HAP-1 (cell line): ENCODE measurements at regions of chr16 and their contacts with region 1.

Region 1: DNA sequence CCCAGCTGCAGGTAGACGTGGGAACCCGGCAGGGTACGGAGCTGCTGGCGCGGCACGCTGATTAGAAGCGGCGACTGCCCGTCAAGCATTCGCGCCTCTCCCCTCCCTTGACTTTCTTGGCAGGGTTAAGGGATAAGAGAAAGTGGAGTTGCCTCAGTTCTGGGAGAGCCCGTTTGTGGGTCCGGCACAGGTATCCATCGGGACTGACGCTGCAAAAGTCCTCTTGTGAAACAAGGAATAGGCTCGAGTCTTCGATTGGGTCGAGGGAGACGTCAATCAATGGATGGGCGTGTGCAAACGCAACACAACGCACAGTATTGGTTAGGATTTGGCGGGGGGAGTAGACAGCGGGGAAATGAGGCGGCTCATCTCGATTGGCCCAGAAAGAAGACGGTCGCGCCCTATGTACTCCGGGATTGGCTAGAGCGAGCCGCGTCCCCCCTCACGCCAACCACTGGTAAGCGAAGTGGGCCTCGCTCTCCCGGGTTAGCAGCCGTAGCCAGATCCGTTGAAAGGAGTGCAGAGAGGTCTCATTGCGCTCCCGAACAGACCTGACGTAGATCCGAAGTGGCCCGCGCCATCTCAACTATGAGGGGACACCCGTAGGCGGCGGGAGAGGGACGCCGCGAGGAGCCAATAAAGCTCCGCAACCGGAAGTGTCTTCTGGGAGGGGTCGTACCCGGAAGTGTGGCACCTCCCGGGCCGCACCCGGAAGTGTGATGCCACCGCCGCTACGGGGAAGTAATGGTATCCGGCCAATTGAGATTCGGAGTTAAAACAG is at the start of gene MON1B:
- DNase-seq: peak; percentile 96
- H3K4me3 ChIP-seq: peak within 1 kb of the TSS; percentile 69
- H3K4me1 ChIP-seq: peaks cover 8% of the 10 kb centered on the region; the same call in 1 of the 2 replicates
- H3K27me3 ChIP-seq: no peaks in the 10 kb centered on the region; the same call in 1 of the 2 replicates

Region 2: GRCh38 chr16:75647492-75648264 is 1543.0 kb before region 1 on chr16 and contains the starts of genes KARS1 and TERF2IP:
- in situ Hi-C with region 1: loop called (anchors 25 kb)
- DNase-seq: peak; percentile 89 to 94
- H3K4me3 ChIP-seq: peak within 1 kb of the TSS; percentile 92
- H3K4me1 ChIP-seq: peaks cover 31% of the 10 kb centered on the region
- H3K27me3 ChIP-seq: no peaks in the 10 kb centered on the region

Region 3: GRCh38 chr16:76800196-76800595 is 390.5 kb before region 1 on chr16:
- in situ Hi-C with region 1: no loop called
- DNase-seq: no peak
- H3K4me3 ChIP-seq: no peak overlapping the region
- H3K4me1 ChIP-seq: no peaks in the 10 kb centered on the region
- H3K27me3 ChIP-seq: no peaks in the 10 kb centered on the region